Dorsolateral prefrontal cortex (tissue), 120 donors: ENCODE measurements at regions of chr3 and their contacts with region 1.

Region 1: DNA sequence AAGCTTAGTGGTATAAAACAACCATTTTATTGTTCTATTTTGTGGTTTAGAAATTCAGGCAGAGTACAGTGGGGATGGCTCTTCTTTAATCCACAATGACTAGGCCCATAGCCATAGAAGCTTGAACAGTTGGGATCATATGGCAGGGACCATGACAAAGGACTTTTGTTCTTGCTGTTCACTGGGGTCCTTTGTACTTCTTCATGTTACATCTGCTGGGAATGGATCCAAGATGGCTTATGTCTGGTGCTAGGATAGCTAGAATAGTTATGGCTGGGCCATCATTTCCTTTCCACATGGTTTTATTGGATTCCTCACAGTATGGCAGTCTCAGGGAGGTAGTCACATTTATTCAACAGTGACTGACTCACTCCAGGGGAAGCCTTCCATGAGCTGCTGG is 427.9 kb upstream of the AGTR1 start:
- DNase-seq: peak in 3 of 10 donors; percentile 7 to 66 (median 47)
- H3K4me3 ChIP-seq: no peak overlapping the region
- H3K27ac ChIP-seq: peak overlapping the region in 56 of 59 donors; percentile 28 to 92 (median 82)
- H3K27me3 ChIP-seq: peaks cover 0 to 6% (median 0%) of the 10 kb centered on the region in 45 donors
- CTCF ChIP-seq: peak in 1 of 56 donors; percentile 16

Region 2: DNA sequence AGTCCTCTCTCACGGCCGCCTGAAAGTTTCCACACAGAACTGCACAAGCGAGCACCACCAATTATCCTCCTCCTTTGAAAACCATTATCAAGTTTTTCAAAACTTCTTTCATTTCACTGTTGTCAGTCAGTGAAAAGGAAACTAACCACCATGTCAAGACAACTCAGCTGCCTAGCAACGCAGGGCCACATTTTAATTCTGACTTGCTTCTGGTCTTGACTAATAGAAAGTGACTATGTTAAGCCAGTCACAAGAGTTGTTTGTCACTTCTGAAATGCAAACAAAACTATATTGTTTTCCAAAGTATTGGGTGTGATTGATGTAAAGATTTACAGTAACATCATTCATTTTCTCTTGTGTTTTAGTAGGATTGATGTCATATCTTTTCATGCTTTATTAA is 184.9 kb before region 1 on chr3:
- intact Hi-C with region 1: loop called in 1 of 2 experiments (anchors 10 kb)
- DNase-seq: no peak
- H3K4me3 ChIP-seq: peak overlapping the region in 26 of 59 donors; percentile 1 to 40 (median 17)
- H3K27ac ChIP-seq: peak overlapping the region in 41 of 59 donors; percentile 2 to 90 (median 49)
- H3K27me3 ChIP-seq: no peaks in the 10 kb centered on the region
- CTCF ChIP-seq: no peak

Region 3: GRCh38 chr3:148190441-148190990 is 79.3 kb before region 1 on chr3:
- intact Hi-C with region 1: loop called in 1 of 2 experiments (anchors 1 kb)
- DNase-seq: no peak
- H3K4me3 ChIP-seq: peak overlapping the region in 2 of 59 donors; percentile 23 to 31
- H3K27ac ChIP-seq: peak overlapping the region in 57 of 59 donors; percentile 3 to 89 (median 73)
- H3K27me3 ChIP-seq: no peaks in the 10 kb centered on the region
- CTCF ChIP-seq: peak in 2 of 56 donors; percentile 18 to 23

Region 4: GRCh38 chr3:148202386-148202785 is 67.4 kb before region 1 on chr3:
- intact Hi-C with region 1: loop called in 1 of 2 experiments (anchors 5 kb)
- DNase-seq: no peak
- H3K4me3 ChIP-seq: no peak overlapping the region
- H3K27ac ChIP-seq: peak overlapping the region in 1 of 59 donors; percentile 20
- H3K27me3 ChIP-seq: no peaks in the 10 kb centered on the region
- CTCF ChIP-seq: peak in 14 of 56 donors; percentile 10 to 48 (median 22)

Region 5: DNA sequence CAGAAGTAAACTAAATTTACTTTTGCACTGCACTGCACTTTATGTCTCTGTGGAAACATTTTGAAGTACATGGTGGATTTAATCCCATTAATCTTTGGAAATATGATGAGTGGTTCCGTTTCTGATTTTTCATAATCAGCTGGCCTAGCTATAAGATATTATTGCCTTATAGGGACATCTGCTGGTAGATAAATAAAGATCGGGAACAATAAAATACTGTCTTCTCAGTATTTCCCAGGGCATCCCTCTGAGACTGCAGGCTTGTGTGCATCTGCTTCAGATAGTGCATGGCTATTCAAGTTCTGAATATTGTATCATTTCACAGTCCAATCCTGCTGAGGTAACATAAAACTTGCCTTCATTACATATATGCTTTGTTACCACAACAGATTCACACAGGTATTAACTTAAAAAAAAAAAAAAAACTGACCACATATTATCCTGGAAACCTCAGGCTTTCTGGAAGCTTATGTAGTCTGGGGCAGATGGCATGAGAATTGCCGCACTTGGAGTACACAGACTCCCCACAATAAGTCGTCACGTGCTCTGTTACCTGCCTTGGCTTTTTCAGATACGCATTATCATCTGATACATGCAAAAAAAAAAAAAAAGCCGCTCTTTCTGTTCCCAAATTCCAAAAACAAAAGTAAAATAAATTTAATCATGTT is 97.1 kb after region 1 on chr3:
- intact Hi-C with region 1: loop called in 1 of 2 experiments (anchors 10 kb)
- DNase-seq: peak in 2 of 10 donors; percentile 25 to 30
- H3K4me3 ChIP-seq: no peak overlapping the region
- H3K27ac ChIP-seq: no peak overlapping the region
- H3K27me3 ChIP-seq: no peaks in the 10 kb centered on the region
- CTCF ChIP-seq: peak in 55 of 56 donors; percentile 23 to 74 (median 51)

Region 6: DNA sequence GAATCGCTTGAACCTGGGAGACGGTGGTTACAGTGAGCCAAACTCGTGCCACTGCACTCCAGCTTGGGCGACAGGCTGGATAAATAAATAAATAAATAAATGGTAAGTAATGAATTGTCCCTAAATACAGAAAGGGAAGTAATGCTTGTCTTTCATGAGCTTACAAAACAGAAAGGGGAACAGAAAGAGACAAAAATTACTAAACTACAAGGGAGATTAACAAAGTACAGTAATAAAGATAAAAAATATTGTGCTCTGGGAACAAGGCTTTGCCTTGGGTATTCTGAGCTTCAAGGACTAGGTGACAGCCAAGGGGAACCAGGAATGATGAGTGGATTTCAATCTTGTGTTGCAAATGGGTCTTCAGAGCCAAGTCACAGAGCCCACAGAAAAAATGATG is 825.7 kb after region 1 on chr3:
- intact Hi-C with region 1: no loop called
- DNase-seq: no peak
- H3K4me3 ChIP-seq: no peak overlapping the region
- H3K27ac ChIP-seq: no peak overlapping the region
- H3K27me3 ChIP-seq: no peaks in the 10 kb centered on the region
- CTCF ChIP-seq: no peak